HEK293 (cell line): ENCODE measurements at regions of chr22 and their contacts with region 1.

Region 1: GRCh38 chr22:23527971-23528740 is 51.9 kb downstream of the IGLL1 start:
- H3K4me3 ChIP-seq: no peak overlapping the region
- H3K27ac ChIP-seq: no peak overlapping the region
- H3K4me1 ChIP-seq: no peaks in the 10 kb centered on the region
- CTCF ChIP-seq: no peak

Region 2: DNA sequence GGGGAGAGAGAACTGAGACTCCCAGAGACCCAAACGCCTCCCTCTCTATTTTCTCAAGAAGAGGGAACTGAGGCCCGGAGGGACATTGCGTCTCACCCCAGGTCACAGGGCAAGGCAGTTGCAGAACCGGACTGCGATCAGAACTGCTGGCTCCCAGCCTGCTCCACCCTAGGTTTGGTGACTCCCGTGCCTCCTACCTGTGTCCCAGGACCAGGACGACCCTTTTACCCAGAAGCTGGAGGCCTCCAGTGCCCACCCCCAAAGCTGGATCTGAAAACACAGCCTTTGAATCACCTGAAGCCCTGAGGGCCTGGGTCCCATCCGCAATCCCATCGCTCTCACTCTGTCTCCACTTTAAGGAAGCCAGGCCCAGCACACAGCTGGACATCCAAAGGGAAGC is 475.7 kb after region 1 on chr22:
- CTCF ChIA-PET with region 1: no interaction called
- POLR2A ChIA-PET with region 1: interaction called, 11 read pairs
- H3K4me3 ChIP-seq: no peak overlapping the region
- H3K27ac ChIP-seq: no peak overlapping the region
- H3K4me1 ChIP-seq: no peaks in the 10 kb centered on the region
- CTCF ChIP-seq: no peak